ENCODE measurements at regions of chr1 and their contacts with region 1.

Region 1: DNA sequence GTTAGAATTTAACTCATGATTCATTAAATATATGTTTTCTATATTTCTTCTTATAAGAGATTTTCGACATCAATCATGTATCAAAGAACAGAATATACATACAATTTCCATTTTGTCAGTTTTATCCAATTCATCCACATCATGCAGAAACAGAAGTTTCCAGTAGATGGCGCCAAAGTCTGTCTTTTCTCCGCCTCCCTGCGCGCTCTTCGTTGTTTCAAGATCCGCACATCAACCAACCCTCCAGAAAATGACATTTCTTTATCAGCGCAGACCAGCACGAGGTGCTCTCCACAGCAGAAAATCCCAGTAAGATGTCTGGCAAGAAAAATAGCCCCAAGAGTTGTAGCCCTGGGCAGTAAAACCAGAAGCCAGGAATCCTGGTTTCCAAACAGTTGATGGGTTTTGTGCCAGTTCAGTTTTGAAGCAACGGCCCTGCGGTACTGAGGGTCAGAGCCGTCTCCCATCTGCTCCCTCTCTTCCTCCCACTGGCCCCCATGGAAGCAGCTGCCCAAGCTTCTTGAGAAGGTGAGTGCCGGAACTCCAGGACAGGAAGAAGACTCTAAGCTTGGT is 38.6 kb upstream of the GPR137B start:
- DNase-seq: peak; percentile 76

Region 2: DNA sequence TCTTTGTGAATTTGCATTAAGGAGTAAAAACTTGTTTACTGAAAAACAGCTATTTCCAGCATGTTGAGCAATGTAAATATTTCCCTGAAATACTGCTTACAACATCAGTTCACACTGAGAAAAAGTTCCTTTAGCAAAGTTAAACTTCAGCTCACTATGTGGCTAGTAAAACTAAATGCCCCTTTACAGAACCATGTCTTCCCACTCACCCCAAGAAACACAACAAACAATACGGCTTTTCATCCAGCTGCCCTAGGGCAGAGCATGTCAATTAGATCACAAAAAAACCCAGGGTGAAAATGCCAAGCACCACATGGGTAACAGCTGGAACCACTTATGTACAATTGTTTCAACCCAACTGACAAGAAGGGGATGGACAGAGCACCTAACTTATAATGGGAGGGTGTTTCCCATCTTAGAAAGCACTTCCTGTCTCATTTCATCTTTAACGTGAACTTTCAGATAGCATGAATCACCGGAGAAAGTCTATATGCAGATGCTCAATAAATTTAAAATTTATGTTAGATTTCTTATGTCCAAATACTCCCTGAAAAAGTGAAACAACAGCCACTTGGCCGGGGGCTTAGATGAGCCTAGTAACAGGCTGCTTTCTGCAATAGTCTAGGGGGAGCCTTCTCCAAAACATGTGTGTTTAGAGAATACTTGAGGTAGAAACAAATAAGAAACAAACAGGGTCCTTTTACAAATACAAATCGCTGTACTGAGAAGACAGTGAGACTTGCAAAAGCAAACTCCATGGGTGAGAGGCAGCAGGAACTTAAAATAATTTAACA is 45.4 kb before region 1 on chr1:
- in situ Hi-C with region 1: no loop called
- DNase-seq: no peak

Region 3: DNA sequence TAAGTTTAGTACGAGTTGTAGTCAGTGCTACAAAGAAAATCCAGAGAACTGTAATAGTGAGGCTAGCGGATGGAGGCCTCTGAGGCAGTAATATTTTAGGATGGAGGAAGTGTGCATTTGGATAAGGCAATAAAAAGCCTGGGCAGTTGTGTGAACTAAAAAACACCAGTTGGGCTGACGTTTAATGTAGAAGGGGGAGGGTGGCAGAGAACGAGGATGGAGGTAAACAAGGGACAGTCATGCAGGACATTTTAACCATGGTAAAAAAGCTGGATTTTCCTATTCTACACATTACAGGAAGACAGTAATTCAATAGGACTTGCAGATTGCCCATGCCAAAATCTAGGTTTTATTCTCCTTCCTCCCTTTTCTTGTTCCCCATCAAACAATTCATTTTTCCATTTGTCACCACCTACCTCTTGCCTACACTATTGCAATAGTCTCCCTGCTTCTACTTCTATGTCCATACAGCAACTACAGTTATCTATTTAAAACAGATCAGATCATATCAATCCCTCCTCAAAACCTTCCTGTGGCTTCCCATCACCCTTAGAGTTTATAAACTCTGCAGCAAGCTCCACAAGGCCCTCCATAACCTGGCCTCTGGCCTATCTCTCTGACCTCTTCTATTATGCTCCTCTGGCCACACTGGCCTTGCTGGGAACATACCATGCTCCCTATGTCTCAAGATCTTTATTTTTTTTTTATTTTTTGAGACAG is 150.3 kb after region 1 on chr1:
- in situ Hi-C with region 1: no loop called
- DNase-seq: no peak

Region 4: GRCh38 chr1:236489710-236490377 is 386.1 kb after region 1 on chr1:
- in situ Hi-C with region 1: loop called (anchors 25 kb)
- DNase-seq: peak; percentile 57

Measured in G401 (cell line).